Caco-2 (cell line): ENCODE measurements at regions of chr2 and their contacts with region 1.

Region 1: DNA sequence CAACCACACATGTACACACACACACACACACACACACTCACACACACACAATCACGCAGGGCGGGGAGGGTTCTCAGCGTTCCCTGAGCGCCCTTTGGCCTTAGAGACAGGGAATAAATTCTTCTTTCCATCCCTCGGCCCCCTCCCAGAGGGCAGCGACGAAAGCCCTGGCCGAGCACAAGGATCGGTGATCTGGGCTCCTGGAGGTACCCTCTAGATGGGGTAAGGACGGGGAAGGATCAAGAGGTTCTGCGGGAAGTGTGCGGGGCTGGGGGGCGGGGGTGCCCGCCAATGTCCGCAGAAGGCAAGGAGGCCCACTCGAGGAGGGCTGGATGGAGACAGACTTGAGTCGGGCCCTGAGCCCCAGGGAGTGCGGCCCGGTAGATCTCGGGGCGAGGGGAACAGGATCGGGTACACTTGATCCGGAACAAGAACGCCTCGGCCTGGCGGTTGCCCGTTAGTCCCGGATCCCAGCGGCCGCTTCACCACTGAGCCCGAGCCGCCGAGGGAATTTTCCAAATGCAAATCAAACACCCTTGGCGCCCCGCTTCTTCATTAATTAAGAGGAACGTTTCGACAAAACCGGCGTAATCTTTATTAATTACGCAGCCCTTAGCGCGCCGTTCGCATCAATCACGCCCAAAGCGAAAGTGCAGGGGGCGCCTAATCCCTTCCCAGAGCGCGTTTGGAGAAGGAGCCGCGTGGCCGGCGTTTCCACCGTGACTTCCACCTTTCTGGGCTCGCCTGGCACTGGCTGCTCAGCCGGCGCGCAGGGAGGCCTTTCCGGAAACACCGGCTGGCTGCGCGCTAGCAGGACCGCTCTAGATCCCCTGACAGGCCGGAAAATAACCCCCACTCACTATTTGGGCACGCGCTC is 7.0 kb upstream of the PAX3 start:
- DNase-seq: peak in 1 of 2 experiments; percentile 35
- H3K4me3 ChIP-seq: peak overlapping the region; percentile 20
- H3K4me3 Mint-ChIP-seq: peak overlapping the region; percentile 58
- H3K27ac Mint-ChIP-seq: no peak overlapping the region
- H3K4me1 ChIP-seq: peaks cover 5% of the 10 kb centered on the region; the same call in 1 of the 2 replicates
- H3K4me1 Mint-ChIP-seq: peaks cover 10% of the 10 kb centered on the region
- H3K27me3 ChIP-seq: peaks cover 6% of the 10 kb centered on the region
- H3K27me3 Mint-ChIP-seq: peaks cover 52% of the 10 kb centered on the region
- CTCF ChIP-seq: no peak

Region 2: DNA sequence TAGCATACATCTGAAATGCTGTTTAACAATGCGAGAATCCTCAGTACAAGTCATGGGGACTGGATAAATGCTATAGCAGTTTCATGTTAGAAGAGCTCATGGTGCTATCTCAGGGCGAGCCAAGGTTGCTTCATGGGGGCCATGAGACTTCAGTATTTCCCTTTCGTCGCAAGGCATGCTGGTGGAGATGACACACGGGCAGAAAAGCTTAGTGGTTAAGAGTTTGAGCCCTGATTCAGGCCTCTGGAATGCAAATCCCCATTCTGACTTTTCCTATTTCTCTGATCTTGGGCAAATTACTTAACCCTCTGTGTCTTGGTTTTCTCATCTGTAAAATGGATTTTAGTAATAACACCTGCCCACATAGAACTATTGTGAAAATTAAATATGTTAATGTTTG is 676.3 kb before region 1 on chr2:
- CTCF ChIA-PET with region 1: no interaction called
- POLR2A ChIA-PET with region 1: no interaction called
- intact Hi-C with region 1: loop called (anchors 10 kb)
- DNase-seq: peak; percentile 23 to 57
- H3K4me3 ChIP-seq: no peak overlapping the region
- H3K4me3 Mint-ChIP-seq: no peak overlapping the region
- H3K27ac Mint-ChIP-seq: no peak overlapping the region
- H3K4me1 ChIP-seq: peaks cover 22% of the 10 kb centered on the region
- H3K4me1 Mint-ChIP-seq: peaks cover 24% of the 10 kb centered on the region
- H3K27me3 ChIP-seq: no peaks in the 10 kb centered on the region
- H3K27me3 Mint-ChIP-seq: no peaks in the 10 kb centered on the region
- CTCF ChIP-seq: no peak

Region 3: DNA sequence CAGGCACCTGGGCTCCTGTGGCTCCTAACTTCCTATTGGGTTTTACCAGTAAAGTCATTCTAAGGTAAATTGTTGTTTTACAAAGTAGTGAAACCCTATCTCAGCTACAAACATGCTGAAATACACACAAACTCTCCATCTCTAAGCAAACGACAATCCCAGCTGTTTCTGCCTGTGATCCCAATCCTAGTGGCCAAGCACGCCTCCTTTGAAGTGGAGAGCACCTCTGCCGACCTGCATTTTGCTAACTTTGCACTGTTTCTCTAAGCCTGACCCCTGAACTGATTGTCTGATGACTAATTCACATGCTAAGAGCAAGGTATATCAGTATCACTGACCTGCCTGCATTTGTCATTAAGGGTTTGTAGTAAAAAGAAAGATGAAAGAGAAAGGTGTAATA is 131.3 kb before region 1 on chr2:
- CTCF ChIA-PET with region 1: no interaction called
- POLR2A ChIA-PET with region 1: no interaction called
- intact Hi-C with region 1: loop called (anchors 5 kb)
- DNase-seq: peak; percentile 17 to 43
- H3K4me3 ChIP-seq: no peak overlapping the region
- H3K4me3 Mint-ChIP-seq: no peak overlapping the region
- H3K27ac Mint-ChIP-seq: no peak overlapping the region
- H3K4me1 ChIP-seq: no peaks in the 10 kb centered on the region; the same call in 1 of the 2 replicates
- H3K4me1 Mint-ChIP-seq: peaks cover 6% of the 10 kb centered on the region
- H3K27me3 ChIP-seq: no peaks in the 10 kb centered on the region; the same call in 1 of the 2 replicates
- H3K27me3 Mint-ChIP-seq: peaks cover 30% of the 10 kb centered on the region
- CTCF ChIP-seq: no peak

Region 4: DNA sequence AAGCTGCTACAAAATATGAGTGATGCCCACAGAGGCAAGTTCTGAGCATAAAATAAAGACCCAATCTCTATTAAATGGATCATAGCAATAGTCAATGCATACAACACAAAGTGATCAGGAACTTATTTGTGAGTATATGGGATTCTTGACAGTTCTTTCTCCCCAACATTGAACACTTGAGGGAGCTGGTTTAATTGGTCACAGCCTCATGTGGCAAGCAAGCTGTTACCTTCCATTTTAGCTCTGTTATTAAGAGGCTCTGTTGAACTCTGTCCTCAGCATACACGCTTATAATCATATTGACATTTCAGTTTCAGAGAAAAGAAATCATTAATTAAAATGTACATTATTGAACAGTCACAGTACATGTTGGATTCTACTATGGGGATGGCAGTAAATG is 30.7 kb after region 1 on chr2:
- CTCF ChIA-PET with region 1: no interaction called
- POLR2A ChIA-PET with region 1: no interaction called
- intact Hi-C with region 1: no loop called
- DNase-seq: no peak
- H3K4me3 ChIP-seq: no peak overlapping the region
- H3K4me3 Mint-ChIP-seq: no peak overlapping the region
- H3K27ac Mint-ChIP-seq: no peak overlapping the region
- H3K4me1 ChIP-seq: no peaks in the 10 kb centered on the region
- H3K4me1 Mint-ChIP-seq: no peaks in the 10 kb centered on the region
- H3K27me3 ChIP-seq: no peaks in the 10 kb centered on the region
- H3K27me3 Mint-ChIP-seq: peaks cover 2% of the 10 kb centered on the region
- CTCF ChIP-seq: peak in 1 of 2 experiments; percentile 11

Region 5: DNA sequence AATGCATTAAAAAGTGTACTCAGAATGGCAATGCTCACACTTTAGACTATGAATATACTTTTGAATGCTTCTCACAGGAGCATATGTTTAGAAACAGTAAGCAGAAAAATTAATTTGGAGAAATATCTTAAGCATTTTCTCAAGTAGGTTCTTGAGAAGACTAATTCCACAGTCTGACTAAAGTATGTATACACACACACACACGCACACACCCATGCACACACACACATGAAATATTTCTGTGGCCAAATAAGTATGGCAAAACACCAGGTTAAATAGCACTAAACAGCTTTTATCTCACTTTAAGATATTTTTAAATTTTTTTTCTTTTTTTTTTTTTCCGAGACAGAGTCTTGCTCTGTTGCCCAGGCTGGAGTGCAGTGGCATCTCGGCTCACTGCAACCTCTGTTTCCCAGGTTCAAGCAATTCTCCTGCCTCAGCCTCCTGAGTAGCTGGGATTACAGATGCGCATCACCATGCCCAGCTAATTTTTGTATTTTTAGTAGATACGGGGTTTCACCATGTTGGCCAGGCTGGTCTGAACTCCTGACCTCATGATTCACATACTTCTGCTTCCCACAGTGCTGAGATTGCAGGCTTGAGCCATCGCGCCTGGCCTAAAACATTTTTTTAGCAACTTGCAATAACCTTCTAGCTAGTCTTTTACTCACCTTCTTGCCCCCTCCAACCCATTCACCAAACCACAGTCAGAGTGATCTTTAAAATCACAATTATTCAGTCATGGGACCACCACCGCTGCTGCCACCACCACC is 1363.9 kb after region 1 on chr2:
- CTCF ChIA-PET with region 1: no interaction called
- POLR2A ChIA-PET with region 1: no interaction called
- intact Hi-C with region 1: no loop called
- DNase-seq: no peak
- H3K4me3 ChIP-seq: no peak overlapping the region
- H3K4me3 Mint-ChIP-seq: no peak overlapping the region
- H3K27ac Mint-ChIP-seq: no peak overlapping the region
- H3K4me1 ChIP-seq: no peaks in the 10 kb centered on the region
- H3K4me1 Mint-ChIP-seq: peaks cover 1% of the 10 kb centered on the region
- H3K27me3 ChIP-seq: no peaks in the 10 kb centered on the region
- H3K27me3 Mint-ChIP-seq: peaks cover 7% of the 10 kb centered on the region
- CTCF ChIP-seq: no peak